CD8-positive, alpha-beta memory T cell (primary cell): ENCODE measurements at regions of chr1 and their contacts with region 1.

Region 1: GRCh38 chr1:225911191-225912130 is 12.6 kb downstream of the PYCR2 start:
- DNase-seq: peak; percentile 65 to 80 (median 70)
- H3K4me3 ChIP-seq: no peak overlapping the region
- H3K4me3 Mint-ChIP-seq: no peak overlapping the region
- H3K27ac ChIP-seq: no peak overlapping the region
- H3K27ac Mint-ChIP-seq: peak overlapping the region in 1 of 8 donors; percentile 76
- H3K4me1 ChIP-seq: peaks cover 22% of the 10 kb centered on the region
- H3K4me1 Mint-ChIP-seq: peaks cover 24 to 31% (median 28%) of the 10 kb centered on the region in 3 donors
- H3K27me3 ChIP-seq: no peaks in the 10 kb centered on the region
- H3K27me3 Mint-ChIP-seq: no peaks in the 10 kb centered on the region

Region 2: DNA sequence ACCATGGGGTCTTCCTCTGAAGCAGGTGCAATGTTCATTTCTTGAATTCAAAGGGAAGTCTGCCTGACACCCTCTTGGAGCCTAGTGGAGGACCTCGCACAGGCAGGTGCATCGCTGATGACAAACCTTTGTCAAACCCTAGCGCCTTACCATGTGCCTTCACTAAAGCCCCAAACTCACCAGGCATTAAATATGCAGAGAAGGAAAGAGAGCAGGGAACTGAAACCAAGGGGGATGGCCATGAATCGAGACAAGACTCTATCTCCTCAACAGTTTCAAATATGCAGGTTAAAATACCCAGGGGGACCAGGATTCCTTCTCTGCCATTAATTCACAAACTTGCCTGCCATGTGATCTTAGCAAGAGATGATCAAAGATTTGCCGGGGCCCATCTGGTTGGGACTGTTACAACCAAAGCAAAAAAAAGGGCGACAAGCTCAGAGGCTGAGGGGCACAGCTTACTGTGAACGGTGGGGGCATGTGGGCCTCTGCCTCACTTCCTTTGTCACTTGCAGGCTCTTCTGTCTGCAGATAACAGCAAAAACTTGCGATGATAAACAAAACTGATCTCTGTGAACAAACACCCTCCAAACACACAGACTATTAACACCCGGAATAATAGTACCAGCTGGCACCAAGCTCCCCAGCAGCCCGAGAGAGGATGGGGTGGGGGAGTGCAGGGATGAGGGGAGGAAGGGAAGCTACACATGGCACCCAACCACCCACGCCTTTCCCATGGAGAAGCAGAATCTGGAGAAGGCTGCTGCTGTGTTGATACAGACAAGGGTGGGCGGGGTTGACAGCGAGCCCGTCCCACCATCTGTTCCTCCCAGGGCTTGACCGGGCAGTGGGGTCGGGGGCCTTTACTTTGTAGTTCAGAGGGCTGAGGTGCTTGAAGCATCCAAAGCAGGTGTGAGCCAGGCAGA is 63.2 kb before region 1 on chr1:
- CTCF ChIA-PET with region 1: interaction called, 11 read pairs
- POLR2A ChIA-PET with region 1: no interaction called
- DNase-seq: peak in 4 of 5 donors; percentile 26 to 70 (median 60)
- H3K4me3 ChIP-seq: no peak overlapping the region
- H3K4me3 Mint-ChIP-seq: peak overlapping the region; percentile 26 to 89 (median 79)
- H3K27ac ChIP-seq: no peak overlapping the region
- H3K27ac Mint-ChIP-seq: peak overlapping the region; percentile 84 to 99 (median 95)
- H3K4me1 ChIP-seq: peaks cover 55% of the 10 kb centered on the region
- H3K4me1 Mint-ChIP-seq: peaks cover 56 to 82% (median 76%) of the 10 kb centered on the region in 3 donors
- H3K27me3 ChIP-seq: no peaks in the 10 kb centered on the region
- H3K27me3 Mint-ChIP-seq: no peaks in the 10 kb centered on the region

Region 3: GRCh38 chr1:225866061-225866837 is 45.2 kb before region 1 on chr1:
- CTCF ChIA-PET with region 1: interaction called, 15 read pairs
- POLR2A ChIA-PET with region 1: no interaction called
- DNase-seq: peak; percentile 40 to 82 (median 70)
- H3K4me3 ChIP-seq: no peak overlapping the region
- H3K4me3 Mint-ChIP-seq: peak overlapping the region; percentile 2 to 79 (median 71)
- H3K27ac ChIP-seq: no peak overlapping the region
- H3K27ac Mint-ChIP-seq: peak overlapping the region; percentile 75 to 97 (median 92)
- H3K4me1 ChIP-seq: peaks cover 31% of the 10 kb centered on the region
- H3K4me1 Mint-ChIP-seq: peaks cover 40 to 51% (median 48%) of the 10 kb centered on the region in 3 donors
- H3K27me3 ChIP-seq: no peaks in the 10 kb centered on the region
- H3K27me3 Mint-ChIP-seq: no peaks in the 10 kb centered on the region

Region 4: DNA sequence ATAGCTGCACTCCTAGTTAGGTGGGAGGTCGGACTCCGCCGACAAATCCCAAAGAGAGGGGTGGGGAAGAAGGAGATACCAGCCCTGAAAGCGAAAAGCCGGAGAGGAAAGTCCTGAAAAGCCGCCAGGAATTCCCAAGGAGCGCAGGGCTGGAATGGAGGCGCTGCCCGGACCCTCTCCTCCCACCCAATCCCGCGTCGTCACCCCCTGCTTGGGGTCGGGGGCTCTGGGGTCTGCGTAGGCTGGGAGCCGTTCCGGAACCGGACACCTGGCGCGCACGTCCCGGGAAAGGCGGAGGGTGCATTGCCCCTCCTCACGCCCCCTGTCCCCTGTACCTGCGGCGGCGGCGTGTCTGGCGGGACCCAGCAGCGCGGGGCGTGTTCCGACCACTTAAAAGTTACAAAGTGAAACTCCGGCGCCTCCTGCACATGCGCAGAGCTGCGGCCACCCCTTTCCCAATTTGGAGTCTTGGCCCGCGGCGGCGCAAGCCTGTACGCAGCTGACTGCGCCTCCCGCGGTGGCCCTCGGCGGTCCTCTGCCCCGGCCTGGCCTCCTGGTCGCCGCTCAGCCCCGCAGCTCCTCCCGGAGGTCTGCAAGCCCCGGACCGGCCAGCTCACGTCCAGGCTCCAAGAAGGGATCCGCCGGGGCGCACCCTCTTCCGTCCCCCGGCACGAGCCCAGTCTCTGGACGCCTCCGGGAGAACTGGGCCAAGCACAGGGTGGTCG is 29.3 kb before region 1 on chr1 and contains the start of gene TMEM63A:
- CTCF ChIA-PET with region 1: interaction called, 117 read pairs
- POLR2A ChIA-PET with region 1: interaction called, 18 read pairs
- DNase-seq: peak; percentile 86 to 94 (median 89)
- H3K4me3 ChIP-seq: peak within 1 kb of the TSS; percentile 92
- H3K4me3 Mint-ChIP-seq: peak within 1 kb of the TSS; percentile 94 to 99 (median 97)
- H3K27ac ChIP-seq: peak within 1 kb of the TSS; percentile 95
- H3K27ac Mint-ChIP-seq: peak within 1 kb of the TSS; percentile 90 to 97 (median 96)
- H3K4me1 ChIP-seq: peaks cover 48% of the 10 kb centered on the region
- H3K4me1 Mint-ChIP-seq: peaks cover 50 to 54% (median 53%) of the 10 kb centered on the region in 3 donors
- H3K27me3 ChIP-seq: no peaks in the 10 kb centered on the region
- H3K27me3 Mint-ChIP-seq: no peaks in the 10 kb centered on the region
- total RNA-seq, gene TMEM63A: 51.4 to 55.5 TPM

Region 5: GRCh38 chr1:225923692-225924555 is 12.5 kb after region 1 on chr1 and contains the start of gene PYCR2:
- CTCF ChIA-PET with region 1: interaction called, 18 read pairs
- POLR2A ChIA-PET with region 1: interaction called, 5 read pairs
- DNase-seq: peak; percentile 91 to 96 (median 94)
- H3K4me3 ChIP-seq: peak within 1 kb of the TSS; percentile 99
- H3K4me3 Mint-ChIP-seq: peak within 1 kb of the TSS; percentile 92 to 99 (median 95)
- H3K27ac ChIP-seq: peak within 1 kb of the TSS; percentile 96
- H3K27ac Mint-ChIP-seq: peak within 1 kb of the TSS; percentile 76 to 98 (median 94)
- H3K4me1 ChIP-seq: peaks cover 61% of the 10 kb centered on the region
- H3K4me1 Mint-ChIP-seq: peaks cover 30 to 55% (median 40%) of the 10 kb centered on the region in 3 donors
- H3K27me3 ChIP-seq: no peaks in the 10 kb centered on the region
- H3K27me3 Mint-ChIP-seq: no peaks in the 10 kb centered on the region
- total RNA-seq, gene PYCR2: 130 to 131 TPM

Region 6: DNA sequence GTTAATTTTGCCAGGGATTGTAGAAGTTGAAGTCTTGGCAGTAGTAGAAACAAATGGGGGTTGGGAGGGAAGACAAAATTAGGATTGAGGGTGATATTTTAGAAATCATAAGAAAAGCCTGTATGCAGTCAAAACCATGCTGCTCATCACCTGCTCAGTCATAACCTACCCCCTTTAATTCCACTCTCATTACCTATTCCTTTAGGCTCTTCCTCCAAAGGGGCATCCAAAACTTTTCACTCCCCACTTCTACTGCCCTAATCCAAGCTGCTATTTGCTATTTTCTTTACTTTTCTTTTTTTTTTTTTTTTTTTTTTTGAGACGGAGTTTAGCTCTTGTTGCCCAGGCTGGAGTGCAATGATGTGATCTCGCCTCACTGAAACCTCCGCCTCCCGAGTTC is 162.6 kb after region 1 on chr1:
- CTCF ChIA-PET with region 1: no interaction called
- POLR2A ChIA-PET with region 1: no interaction called
- DNase-seq: no peak
- H3K4me3 ChIP-seq: no peak overlapping the region
- H3K4me3 Mint-ChIP-seq: peak overlapping the region in 1 of 7 donors; percentile 4
- H3K27ac ChIP-seq: no peak overlapping the region
- H3K27ac Mint-ChIP-seq: peak overlapping the region in 4 of 8 donors; percentile 12 to 72 (median 32)
- H3K4me1 ChIP-seq: peaks cover 10% of the 10 kb centered on the region
- H3K4me1 Mint-ChIP-seq: peaks cover 21 to 32% (median 26%) of the 10 kb centered on the region in 3 donors
- H3K27me3 ChIP-seq: no peaks in the 10 kb centered on the region
- H3K27me3 Mint-ChIP-seq: no peaks in the 10 kb centered on the region